CD4-positive, alpha-beta T cell (primary cell): ENCODE measurements at regions of chr2 and their contacts with region 1.

Region 1: GRCh38 chr2:44955593-44956392 is 14.3 kb downstream of the SIX3 start:
- DNase-seq: peak; percentile 48 to 80 (median 66)
- ATAC-seq: peak; percentile 83
- H3K4me3 ChIP-seq: no peak overlapping the region
- H3K4me3 Mint-ChIP-seq: no peak overlapping the region
- H3K27ac ChIP-seq: no peak overlapping the region
- H3K27ac Mint-ChIP-seq: no peak overlapping the region
- H3K4me1 ChIP-seq: peaks cover 23% of the 10 kb centered on the region
- H3K4me1 Mint-ChIP-seq: peaks cover 27% of the 10 kb centered on the region
- H3K27me3 ChIP-seq: peaks cover 41 to 57% of the 10 kb centered on the region in 2 experiments
- H3K27me3 Mint-ChIP-seq: peaks cover 77% of the 10 kb centered on the region
- CTCF ChIP-seq: peak; percentile 78

Region 2: DNA sequence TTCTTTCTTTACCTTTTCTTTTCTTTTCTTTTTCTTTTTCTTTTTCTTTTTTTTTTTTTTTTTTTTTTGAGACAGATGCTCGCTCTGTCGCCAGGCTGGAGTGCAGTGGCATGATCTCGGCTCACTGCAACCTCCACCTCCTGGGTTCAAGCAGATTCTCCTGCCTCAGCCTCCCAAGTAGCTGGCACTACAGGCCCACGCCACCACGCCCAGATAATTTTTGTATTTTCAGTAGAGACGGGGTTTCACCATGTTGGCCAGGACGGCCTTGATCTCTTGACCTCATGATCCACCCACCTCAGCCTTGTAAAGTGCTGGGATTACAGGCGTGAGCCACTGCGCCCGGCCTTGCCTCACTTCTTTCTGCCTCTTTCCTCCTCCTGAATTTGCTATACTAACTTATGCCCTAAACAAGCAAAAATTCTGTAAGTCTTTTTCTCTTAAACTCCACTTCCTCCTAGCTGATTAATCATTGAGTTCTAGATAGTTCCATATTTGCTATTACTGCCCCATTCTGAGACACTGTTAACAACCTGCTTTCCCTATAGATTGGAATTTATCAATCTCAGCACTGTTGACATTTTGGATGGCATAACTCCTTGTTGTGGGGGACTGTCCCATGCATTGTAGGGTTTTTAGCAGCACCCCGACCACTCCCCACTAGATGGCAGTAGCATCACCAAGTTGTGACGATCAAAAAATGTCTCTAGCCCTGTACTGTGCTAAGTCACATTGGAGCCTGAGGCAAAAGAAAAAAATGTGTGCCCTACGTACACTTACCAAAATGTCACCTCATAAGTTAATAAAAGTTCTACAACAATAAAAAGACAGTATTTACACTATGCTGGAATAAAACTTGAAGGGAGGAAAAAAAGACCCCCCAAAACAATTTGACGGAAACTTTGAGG is 1343.6 kb before region 1 on chr2:
- CTCF ChIA-PET with region 1: no interaction called
- POLR2A ChIA-PET with region 1: no interaction called
- intact Hi-C with region 1: loop called in 1 of 2 experiments (anchors 5 kb)
- DNase-seq: peak; percentile 52 to 85 (median 64)
- ATAC-seq: peak; percentile 96
- H3K4me3 ChIP-seq: no peak overlapping the region
- H3K4me3 Mint-ChIP-seq: no peak overlapping the region
- H3K27ac ChIP-seq: no peak overlapping the region
- H3K27ac Mint-ChIP-seq: no peak overlapping the region
- H3K4me1 ChIP-seq: no peaks in the 10 kb centered on the region
- H3K4me1 Mint-ChIP-seq: no peaks in the 10 kb centered on the region
- H3K27me3 ChIP-seq: no peaks in the 10 kb centered on the region
- H3K27me3 Mint-ChIP-seq: peaks cover 4% of the 10 kb centered on the region
- CTCF ChIP-seq: peak; percentile 80

Region 3: DNA sequence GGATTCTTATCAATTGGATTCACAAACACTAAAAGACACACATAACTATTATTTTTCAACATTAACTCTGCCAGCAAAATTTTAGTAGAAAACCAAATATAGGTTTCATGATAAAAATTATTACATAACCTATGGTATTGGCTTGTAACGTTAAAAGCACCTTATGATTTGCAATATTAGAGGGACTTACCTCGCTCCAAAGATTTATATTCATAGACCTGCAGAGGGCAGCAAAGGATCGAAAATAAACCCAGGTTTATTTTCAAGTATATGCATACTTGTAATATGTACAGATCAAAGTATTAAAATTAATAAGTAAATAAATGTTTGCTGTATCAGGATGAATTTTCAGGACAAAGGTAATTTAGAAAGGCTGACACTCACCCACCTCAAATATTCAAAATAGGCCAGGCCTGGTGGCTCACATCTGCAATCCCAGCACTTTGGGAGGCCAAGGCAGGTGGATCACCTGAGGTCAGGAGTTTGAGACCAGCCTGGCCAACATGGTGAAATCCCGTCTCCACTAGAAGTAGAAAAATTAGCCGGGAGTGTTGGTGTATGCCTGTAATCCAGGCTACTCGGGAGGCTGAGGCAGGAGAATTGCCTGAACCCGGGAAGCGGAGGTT is 1005.3 kb before region 1 on chr2:
- CTCF ChIA-PET with region 1: no interaction called
- POLR2A ChIA-PET with region 1: no interaction called
- intact Hi-C with region 1: loop called (anchors 5 kb)
- DNase-seq: peak in 4 of 14 experiments; percentile 8 to 58 (median 52)
- ATAC-seq: peak; percentile 39
- H3K4me3 ChIP-seq: no peak overlapping the region
- H3K4me3 Mint-ChIP-seq: no peak overlapping the region
- H3K27ac ChIP-seq: no peak overlapping the region
- H3K27ac Mint-ChIP-seq: no peak overlapping the region
- H3K4me1 ChIP-seq: no peaks in the 10 kb centered on the region
- H3K4me1 Mint-ChIP-seq: no peaks in the 10 kb centered on the region
- H3K27me3 ChIP-seq: no peaks in the 10 kb centered on the region
- H3K27me3 Mint-ChIP-seq: no peaks in the 10 kb centered on the region
- CTCF ChIP-seq: peak; percentile 50

Region 4: DNA sequence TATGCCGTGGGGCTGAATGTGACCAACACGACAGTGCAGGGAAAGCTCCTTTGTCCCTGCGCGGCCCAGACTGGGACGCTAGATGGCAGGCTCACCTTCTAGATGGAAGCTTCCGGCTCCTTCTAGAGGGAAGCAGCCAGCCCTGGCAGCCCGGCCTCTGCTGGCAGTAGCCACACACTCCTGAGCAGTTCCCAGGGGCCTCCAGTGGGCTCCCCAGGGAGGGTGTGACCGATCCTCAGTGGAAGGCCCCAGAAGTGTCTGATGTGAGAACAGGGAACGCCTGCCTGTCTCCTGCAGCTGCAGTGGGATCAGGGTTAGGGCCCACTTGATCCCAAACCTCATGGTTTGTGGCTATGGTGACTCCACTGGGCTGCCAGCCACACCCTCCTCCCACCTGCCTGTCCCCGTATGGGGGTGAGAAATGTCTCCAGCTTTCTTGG is 911.5 kb before region 1 on chr2:
- CTCF ChIA-PET with region 1: interaction called, 16 read pairs
- POLR2A ChIA-PET with region 1: no interaction called
- intact Hi-C with region 1: loop called in 1 of 2 experiments (anchors 1 kb)
- DNase-seq: peak; percentile 60 to 84 (median 70)
- ATAC-seq: peak; percentile 99
- H3K4me3 ChIP-seq: no peak overlapping the region
- H3K4me3 Mint-ChIP-seq: no peak overlapping the region
- H3K27ac ChIP-seq: no peak overlapping the region
- H3K27ac Mint-ChIP-seq: no peak overlapping the region
- H3K4me1 ChIP-seq: peaks cover 6% of the 10 kb centered on the region
- H3K4me1 Mint-ChIP-seq: no peaks in the 10 kb centered on the region
- H3K27me3 ChIP-seq: peaks cover 0 to 2% of the 10 kb centered on the region in 2 experiments
- H3K27me3 Mint-ChIP-seq: no peaks in the 10 kb centered on the region
- CTCF ChIP-seq: peak; percentile 90

Region 5: GRCh38 chr2:44087036-44087713 is 868.6 kb before region 1 on chr2:
- CTCF ChIA-PET with region 1: no interaction called
- POLR2A ChIA-PET with region 1: no interaction called
- intact Hi-C with region 1: loop called in 1 of 2 experiments (anchors 2 kb)
- DNase-seq: peak; percentile 68 to 90 (median 80)
- ATAC-seq: peak; percentile 94
- H3K4me3 ChIP-seq: peak overlapping the region; percentile 48
- H3K4me3 Mint-ChIP-seq: peak overlapping the region; percentile 87
- H3K27ac ChIP-seq: no peak overlapping the region
- H3K27ac Mint-ChIP-seq: peak overlapping the region; percentile 79
- H3K4me1 ChIP-seq: peaks cover 9% of the 10 kb centered on the region
- H3K4me1 Mint-ChIP-seq: peaks cover 11% of the 10 kb centered on the region
- H3K27me3 ChIP-seq: no peaks in the 10 kb centered on the region
- H3K27me3 Mint-ChIP-seq: no peaks in the 10 kb centered on the region
- CTCF ChIP-seq: peak; percentile 95

Region 6: DNA sequence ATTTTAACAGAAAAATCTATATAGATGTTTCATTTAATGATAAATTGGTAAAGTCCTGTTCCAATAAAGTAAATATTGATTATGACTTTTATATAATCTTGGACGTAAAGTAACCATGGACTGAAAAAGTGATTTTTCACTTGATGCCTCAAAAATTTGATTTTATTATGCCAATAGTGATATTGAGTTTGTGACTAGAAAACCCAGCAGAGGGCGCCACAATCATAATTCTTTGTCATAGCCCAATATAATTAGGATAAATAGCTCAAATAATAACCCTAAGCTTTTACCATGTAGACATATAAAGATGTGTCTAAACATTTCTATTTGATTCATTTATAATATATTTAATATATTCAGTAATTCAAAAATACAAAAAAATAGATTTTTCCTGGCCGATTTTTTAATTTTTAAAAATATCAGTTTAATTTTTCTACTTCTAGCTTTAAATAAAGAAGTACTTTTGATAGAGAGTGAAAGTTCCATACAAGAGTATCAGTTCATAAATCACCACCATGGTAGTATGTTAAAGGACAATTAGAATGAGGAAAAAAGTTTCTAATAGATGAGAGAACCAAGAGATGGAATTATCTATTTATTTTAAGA is 563.4 kb before region 1 on chr2:
- CTCF ChIA-PET with region 1: interaction called, 8 read pairs
- POLR2A ChIA-PET with region 1: no interaction called
- intact Hi-C with region 1: loop called (anchors 2 to 5 kb)
- DNase-seq: peak; percentile 13 to 69 (median 38)
- ATAC-seq: no peak
- H3K4me3 ChIP-seq: no peak overlapping the region
- H3K4me3 Mint-ChIP-seq: no peak overlapping the region
- H3K27ac ChIP-seq: no peak overlapping the region
- H3K27ac Mint-ChIP-seq: no peak overlapping the region
- H3K4me1 ChIP-seq: no peaks in the 10 kb centered on the region
- H3K4me1 Mint-ChIP-seq: peaks cover 9% of the 10 kb centered on the region
- H3K27me3 ChIP-seq: no peaks in the 10 kb centered on the region
- H3K27me3 Mint-ChIP-seq: no peaks in the 10 kb centered on the region
- CTCF ChIP-seq: peak; percentile 83

Region 7: DNA sequence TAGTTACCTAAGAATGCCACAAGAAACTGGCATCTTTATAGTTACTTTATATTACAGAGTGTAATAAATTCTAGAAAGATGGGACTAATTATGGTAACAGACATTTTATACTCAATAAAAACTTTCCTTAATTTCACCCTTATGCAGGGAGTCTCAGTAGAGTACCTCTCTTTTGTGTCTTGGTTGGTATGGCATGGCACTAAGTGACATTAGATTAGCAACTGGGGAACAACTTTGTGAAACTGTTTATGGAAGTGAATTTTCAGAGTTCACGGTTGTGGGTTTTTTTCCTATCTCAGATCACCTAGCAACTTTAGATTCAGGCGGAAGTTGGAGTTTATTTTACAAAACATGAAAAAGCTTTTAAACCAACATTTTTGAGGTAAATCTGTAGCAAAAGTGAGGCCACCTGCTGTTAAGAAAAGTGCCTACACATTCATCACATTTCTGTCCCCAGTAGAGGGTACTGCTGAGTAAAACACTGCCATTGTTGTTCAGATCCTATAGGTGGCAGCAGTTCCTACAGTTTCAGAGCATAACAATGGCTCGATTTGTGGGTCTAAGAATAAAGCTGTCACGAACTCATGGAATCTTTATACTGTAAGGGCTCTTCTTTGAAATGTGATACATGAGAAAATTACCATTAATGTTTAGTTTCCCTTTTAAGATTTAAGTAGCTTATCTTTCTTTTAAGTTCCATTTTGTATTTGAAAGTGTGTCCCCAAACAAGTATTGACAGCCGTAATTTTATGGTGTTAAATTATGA is 476.5 kb before region 1 on chr2:
- CTCF ChIA-PET with region 1: interaction called, 5 read pairs
- POLR2A ChIA-PET with region 1: no interaction called
- intact Hi-C with region 1: loop called in 1 of 2 experiments (anchors 2 kb)
- DNase-seq: peak in 10 of 14 experiments; percentile 1 to 82 (median 22)
- ATAC-seq: peak; percentile 100
- H3K4me3 ChIP-seq: no peak overlapping the region
- H3K4me3 Mint-ChIP-seq: no peak overlapping the region
- H3K27ac ChIP-seq: no peak overlapping the region
- H3K27ac Mint-ChIP-seq: peak overlapping the region; percentile 27
- H3K4me1 ChIP-seq: no peaks in the 10 kb centered on the region
- H3K4me1 Mint-ChIP-seq: peaks cover 9% of the 10 kb centered on the region
- H3K27me3 ChIP-seq: no peaks in the 10 kb centered on the region
- H3K27me3 Mint-ChIP-seq: no peaks in the 10 kb centered on the region
- CTCF ChIP-seq: peak; percentile 100